Heart left ventricle (tissue), 16 donors: ENCODE measurements at regions of chr9 and their contacts with region 1.

Region 1: DNA sequence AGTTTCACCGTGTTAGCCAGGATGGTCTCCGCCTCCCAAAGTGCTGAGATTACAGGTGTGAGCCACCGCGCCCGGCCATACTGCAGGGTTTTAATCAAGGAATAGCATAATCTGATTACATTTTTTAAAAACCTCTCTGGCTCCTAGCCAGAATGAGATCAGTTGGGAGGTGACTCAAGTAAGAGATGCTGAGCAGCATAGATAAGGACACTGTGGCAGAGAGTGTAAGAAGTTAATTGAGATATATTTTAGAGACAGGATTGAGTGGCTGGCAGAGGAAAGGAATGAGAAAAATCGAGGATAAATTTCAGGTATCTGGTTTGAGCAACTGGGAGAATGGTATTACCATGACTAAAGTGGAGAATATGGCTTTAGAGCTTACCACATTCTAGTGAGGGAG is 7.3 kb upstream of the RIGI start:
- DNase-seq: no peak
- ATAC-seq: no peak
- H3K4me3 ChIP-seq: no peak overlapping the region
- H3K27ac ChIP-seq: no peak overlapping the region
- H3K4me1 ChIP-seq: no peaks in the 10 kb centered on the region
- H3K27me3 ChIP-seq: no peaks in the 10 kb centered on the region
- CTCF ChIP-seq: no peak
- POLR2A ChIP-seq: no peak

Region 2: GRCh38 chr9:32456564-32456963 is 76.8 kb before region 1 on chr9:
- intact Hi-C with region 1: loop called in 2 of 10 experiments (anchors 5 to 10 kb)
- DNase-seq: no peak
- ATAC-seq: no peak
- H3K4me3 ChIP-seq: no peak overlapping the region
- H3K27ac ChIP-seq: no peak overlapping the region
- H3K4me1 ChIP-seq: peaks cover 0 to 12% (median 0%) of the 10 kb centered on the region in 12 donors
- H3K27me3 ChIP-seq: no peaks in the 10 kb centered on the region
- CTCF ChIP-seq: no peak
- POLR2A ChIP-seq: no peak

Region 3: DNA sequence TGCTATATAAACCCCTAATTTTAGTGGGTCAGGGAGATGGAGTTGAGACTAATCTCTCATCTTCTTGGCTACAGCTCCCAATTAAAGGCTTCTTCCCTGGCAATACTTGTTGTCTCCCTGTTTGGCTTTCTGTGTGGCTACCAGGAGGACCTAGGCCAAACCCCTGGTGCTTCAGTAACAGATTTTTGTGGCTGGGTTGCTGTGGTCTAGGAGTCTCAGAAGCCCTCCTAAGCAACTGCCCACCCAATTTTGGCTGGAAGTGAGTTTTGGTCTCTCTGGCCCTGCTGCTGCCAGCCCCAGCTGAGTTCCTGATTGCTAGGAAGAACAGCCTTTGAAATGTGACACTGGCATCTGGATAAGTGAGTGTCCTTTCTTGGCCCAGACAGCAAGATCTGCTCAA is 17.1 kb before region 1 on chr9:
- intact Hi-C with region 1: no loop called
- DNase-seq: no peak
- ATAC-seq: no peak
- H3K4me3 ChIP-seq: no peak overlapping the region
- H3K27ac ChIP-seq: no peak overlapping the region
- H3K4me1 ChIP-seq: peaks cover 0 to 9% (median 0%) of the 10 kb centered on the region in 12 donors
- H3K27me3 ChIP-seq: no peaks in the 10 kb centered on the region
- CTCF ChIP-seq: no peak
- POLR2A ChIP-seq: no peak